ENCODE measurements at regions of chr2 and their contacts with region 1.

Region 1: DNA sequence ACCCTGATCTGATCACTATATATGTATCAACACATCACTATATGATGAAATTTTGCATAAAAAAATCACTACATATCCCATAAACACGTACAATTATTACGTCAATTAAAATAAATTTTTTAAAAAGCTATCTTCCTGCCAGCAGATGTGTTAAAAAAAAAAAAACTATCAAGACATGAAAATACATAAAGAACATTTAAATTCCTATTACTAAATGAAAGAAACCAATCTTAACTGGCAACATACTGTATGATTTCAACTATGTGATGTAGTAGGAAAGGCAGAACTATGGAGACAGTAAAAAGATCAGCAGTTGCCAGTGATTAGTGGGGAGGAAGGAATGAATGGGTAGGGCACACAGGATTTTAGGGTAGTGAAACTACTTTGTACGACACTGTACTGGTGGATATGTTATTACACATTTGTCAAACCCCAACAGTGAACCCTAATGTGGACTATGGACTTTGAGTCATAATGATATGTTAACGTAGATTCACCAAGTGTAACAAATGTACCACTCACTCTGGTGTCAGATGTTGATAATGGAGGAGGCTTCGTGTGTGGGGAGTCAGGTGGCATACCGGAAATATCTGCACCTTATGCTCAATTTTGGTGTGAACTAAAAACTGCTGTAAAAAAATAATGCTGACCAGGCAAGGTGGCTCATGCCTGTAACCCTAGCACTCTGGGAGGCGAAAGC is 27.4 kb downstream of the USP34 start:
- DNase-seq: peak; percentile 79
- H3K4me3 ChIP-seq: peak overlapping the region; percentile 63
- H3K27ac ChIP-seq: peak overlapping the region; percentile 94
- H3K4me1 ChIP-seq: peaks cover 99% of the 10 kb centered on the region
- CTCF ChIP-seq: no peak

Region 2: DNA sequence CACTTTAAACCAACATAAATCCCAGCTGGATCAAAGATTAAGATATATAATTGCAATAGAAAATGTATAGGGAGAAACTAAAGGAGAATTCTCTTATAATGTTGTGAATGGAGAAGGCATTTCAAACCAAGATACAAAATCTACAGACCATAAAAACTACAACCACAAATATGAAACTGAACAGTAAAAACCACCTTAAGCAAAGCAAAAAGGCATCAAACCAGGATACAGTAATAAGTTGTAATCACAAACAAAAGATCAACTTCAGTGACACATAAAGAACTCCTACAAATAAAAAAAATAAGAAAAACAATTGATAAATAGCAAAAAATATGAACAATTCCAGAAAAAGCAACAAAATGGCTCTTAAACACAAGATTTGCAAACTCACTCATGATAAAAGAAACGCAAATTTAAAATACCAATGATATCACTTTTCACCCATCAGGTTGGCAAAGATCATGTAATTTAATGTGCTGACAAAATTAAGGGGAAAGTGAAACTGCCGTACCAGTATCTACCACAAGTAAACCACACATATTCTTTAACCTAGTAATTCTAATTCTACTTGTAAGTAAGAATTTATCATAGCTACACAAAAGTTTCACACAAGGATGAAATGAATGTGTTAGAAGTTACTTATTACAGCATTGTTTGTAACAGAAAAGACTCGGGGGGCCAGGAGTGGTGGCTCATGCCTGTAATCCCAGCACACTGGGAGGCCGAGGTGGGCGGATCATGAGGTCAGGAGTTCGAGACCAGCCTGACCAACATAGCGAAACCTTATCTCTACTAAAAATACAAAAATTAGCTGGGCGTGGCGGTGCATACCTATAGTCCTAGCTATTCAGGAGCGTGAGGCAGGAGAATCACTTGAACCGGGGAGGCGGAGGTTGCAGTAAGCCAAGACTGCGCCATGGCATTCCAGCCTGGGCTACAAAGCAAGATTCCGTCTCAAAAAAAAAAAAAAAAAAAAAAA is 74.5 kb before region 1 on chr2:
- CTCF ChIA-PET with region 1: no interaction called
- POLR2A ChIA-PET with region 1: no interaction called
- intact Hi-C with region 1: no loop called
- DNase-seq: no peak
- H3K4me3 ChIP-seq: no peak overlapping the region
- H3K27ac ChIP-seq: no peak overlapping the region
- H3K4me1 ChIP-seq: no peaks in the 10 kb centered on the region
- CTCF ChIP-seq: no peak

Region 3: DNA sequence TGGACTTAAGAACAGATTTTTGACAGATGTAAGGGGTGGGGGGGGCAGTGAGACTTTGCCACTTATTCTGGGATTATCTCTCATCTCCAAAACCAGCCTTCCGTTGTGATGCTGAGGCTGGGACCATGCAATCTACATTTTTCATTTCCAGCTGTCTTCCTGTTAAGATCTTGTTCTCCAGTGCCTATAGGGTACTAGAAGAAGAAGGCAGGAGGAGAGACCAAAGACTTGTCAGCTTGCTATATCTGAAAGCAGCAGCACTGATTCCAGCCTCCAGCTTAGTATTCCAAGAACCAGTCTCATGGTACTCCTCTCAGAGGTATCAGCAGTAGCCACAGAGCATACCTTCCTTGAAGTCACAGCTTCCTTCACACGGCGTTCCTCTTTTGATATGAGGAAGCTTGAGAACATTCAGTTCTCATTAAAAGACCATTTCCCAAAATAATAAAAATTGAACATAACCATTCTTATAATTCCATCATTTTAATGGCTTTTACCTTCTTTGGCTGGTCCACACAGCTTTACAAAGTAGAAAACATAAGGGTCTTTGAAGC is 22.4 kb before region 1 on chr2:
- CTCF ChIA-PET with region 1: interaction called, 9 read pairs
- POLR2A ChIA-PET with region 1: interaction called, 40 read pairs
- intact Hi-C with region 1: loop called (anchors 1 kb)
- DNase-seq: peak; percentile 44
- H3K4me3 ChIP-seq: peak overlapping the region; percentile 57
- H3K27ac ChIP-seq: peak overlapping the region; percentile 98
- H3K4me1 ChIP-seq: peaks cover 83% of the 10 kb centered on the region
- CTCF ChIP-seq: no peak

Region 4: GRCh38 chr2:61426267-61426897 is 17.1 kb before region 1 on chr2:
- CTCF ChIA-PET with region 1: interaction called, 9 read pairs
- POLR2A ChIA-PET with region 1: interaction called, 40 read pairs
- intact Hi-C with region 1: loop called (anchors 1 kb)
- DNase-seq: peak; percentile 89
- H3K4me3 ChIP-seq: peak overlapping the region; percentile 57
- H3K27ac ChIP-seq: peak overlapping the region; percentile 98
- H3K4me1 ChIP-seq: peaks cover 85% of the 10 kb centered on the region
- CTCF ChIP-seq: peak; percentile 90

Measured in OCI-LY7 (cell line).